Activated CD4-positive, alpha-beta memory T cell treated with anti-CD3 and anti-CD28 coated beads for 36 hours (primary cell): ENCODE measurements at regions of chr13 and their contacts with region 1.

Region 1: GRCh38 chr13:40922437-40923040 is 96.6 kb downstream of the ELF1 start:
- DNase-seq: no peak
- H3K4me3 Mint-ChIP-seq: peak overlapping the region; percentile 68
- H3K27ac Mint-ChIP-seq: peak overlapping the region; percentile 60
- H3K4me1 Mint-ChIP-seq: peaks cover 15% of the 10 kb centered on the region
- H3K27me3 Mint-ChIP-seq: no peaks in the 10 kb centered on the region

Region 2: GRCh38 chr13:40770934-40771618 is 151.5 kb before region 1 on chr13 and contains the start of gene MRPS31:
- CTCF ChIA-PET with region 1: interaction called, 3 read pairs
- POLR2A ChIA-PET with region 1: no interaction called
- intact Hi-C with region 1: loop called (anchors 1 kb)
- DNase-seq: peak; percentile 97
- H3K4me3 Mint-ChIP-seq: peak within 1 kb of the TSS; percentile 100
- H3K27ac Mint-ChIP-seq: peak within 1 kb of the TSS; percentile 94
- H3K4me1 Mint-ChIP-seq: peaks cover 34% of the 10 kb centered on the region
- H3K27me3 Mint-ChIP-seq: no peaks in the 10 kb centered on the region
- total RNA-seq, gene MRPS31: 35.6 to 40.4 TPM

Region 3: DNA sequence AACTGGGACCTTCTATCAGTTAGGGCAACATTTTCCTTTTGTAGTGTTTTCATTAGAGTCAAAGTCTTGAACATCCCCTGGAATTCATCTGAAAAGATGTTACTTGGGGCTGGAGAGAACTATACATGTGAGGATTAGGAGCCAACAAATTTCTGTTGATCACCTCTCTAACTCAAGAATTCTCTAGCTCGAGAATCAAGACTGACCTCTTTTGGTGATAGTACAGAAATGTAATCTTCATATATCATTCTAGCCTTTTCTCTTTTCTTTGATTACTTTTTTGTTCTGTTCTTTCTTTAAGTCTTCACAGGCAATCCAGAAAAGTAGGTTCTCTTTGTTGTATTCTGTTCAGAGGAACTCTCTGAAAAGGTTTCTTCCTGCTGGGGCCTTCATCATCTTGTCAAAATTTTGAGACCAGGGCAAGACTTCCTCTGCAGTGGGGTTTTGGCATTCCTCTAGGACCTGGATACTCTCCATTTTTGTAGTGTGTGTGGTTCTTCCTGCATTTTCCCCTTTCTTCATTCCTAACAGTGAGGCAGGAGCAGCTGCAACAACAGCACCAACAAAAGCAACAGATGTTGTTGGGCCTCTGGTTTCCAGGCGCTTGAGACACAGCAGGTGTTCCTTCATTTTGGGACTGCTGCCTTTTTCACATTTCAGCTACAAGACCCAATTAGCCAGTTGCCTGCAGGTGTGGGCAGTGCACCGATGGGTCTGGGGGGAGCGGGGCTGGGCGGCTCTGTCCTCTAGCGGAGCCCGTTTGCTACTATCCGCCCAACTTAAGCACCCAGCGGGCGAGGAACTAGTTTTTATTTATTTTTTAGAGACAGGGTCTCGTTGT is 70.4 kb after region 1 on chr13:
- CTCF ChIA-PET with region 1: interaction called, 10 read pairs
- POLR2A ChIA-PET with region 1: no interaction called
- intact Hi-C with region 1: no loop called
- DNase-seq: no peak
- H3K4me3 Mint-ChIP-seq: no peak overlapping the region
- H3K27ac Mint-ChIP-seq: peak overlapping the region; percentile 75
- H3K4me1 Mint-ChIP-seq: peaks cover 72% of the 10 kb centered on the region
- H3K27me3 Mint-ChIP-seq: no peaks in the 10 kb centered on the region

Region 4: DNA sequence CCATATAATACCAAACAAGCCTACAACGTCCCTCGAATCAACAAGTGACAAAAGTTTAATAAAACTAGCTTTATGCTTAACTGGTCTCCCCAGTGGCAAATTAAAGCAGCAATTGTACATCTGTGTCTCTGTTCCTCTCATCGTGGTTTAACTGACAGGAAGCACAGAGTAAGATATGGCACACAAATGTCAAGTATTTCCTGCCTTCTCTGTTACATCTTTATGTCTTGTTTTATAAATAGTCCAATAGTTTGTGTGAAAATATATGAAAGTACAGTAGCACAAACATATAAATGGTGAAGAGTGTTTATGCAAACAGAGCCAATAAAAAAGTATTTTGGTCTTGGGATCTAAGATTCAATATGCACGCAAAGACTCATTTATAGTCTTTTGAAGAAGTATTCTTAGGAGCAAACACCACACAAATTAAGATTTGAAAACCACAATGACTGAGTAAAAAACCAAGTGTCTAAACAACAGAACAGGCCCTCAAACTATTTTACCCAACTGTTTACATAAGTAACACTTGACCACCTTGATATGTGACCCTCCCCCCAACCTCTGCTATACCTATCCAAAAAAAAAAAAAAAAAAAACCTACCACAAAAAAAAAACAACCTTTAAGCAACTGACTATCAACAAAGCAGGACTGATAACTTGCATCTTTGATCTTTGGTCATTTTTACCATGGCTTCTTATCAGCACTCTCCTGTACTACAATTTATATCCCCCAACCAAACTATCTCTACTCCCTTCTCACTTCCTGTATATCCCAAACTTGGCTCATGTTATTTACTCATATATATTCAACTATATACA is 82.5 kb after region 1 on chr13:
- CTCF ChIA-PET with region 1: no interaction called
- POLR2A ChIA-PET with region 1: no interaction called
- intact Hi-C with region 1: loop called (anchors 2 kb)
- DNase-seq: no peak
- H3K4me3 Mint-ChIP-seq: peak overlapping the region; percentile 64
- H3K27ac Mint-ChIP-seq: peak overlapping the region; percentile 79
- H3K4me1 Mint-ChIP-seq: peaks cover 65% of the 10 kb centered on the region
- H3K27me3 Mint-ChIP-seq: no peaks in the 10 kb centered on the region

Region 5: GRCh38 chr13:41145146-41145908 is 222.8 kb after region 1 on chr13:
- CTCF ChIA-PET with region 1: no interaction called
- POLR2A ChIA-PET with region 1: no interaction called
- intact Hi-C with region 1: no loop called
- DNase-seq: no peak
- H3K4me3 Mint-ChIP-seq: no peak overlapping the region
- H3K27ac Mint-ChIP-seq: no peak overlapping the region
- H3K4me1 Mint-ChIP-seq: no peaks in the 10 kb centered on the region
- H3K27me3 Mint-ChIP-seq: no peaks in the 10 kb centered on the region